BJ (cell line): ENCODE measurements at regions of chr5 and their contacts with region 1.

Region 1: DNA sequence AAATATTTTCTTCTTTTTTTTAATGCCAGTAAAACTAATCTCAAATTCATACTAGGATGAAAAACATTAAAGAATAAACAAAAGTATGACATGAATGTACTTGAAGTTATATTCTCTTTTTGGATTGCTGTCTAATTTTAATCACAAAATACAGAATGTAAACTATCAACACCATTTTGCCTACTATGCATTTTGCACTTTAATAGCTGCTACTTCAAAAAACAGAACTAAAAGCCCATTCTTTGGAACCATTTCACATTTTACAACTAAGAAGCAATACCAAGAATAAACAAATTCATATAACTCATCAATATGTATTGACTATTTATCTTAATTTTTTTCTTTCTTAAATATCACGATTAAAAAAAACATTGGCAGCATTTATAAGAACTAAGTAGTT is 58.1 kb downstream of the ADAMTS6 start:
- DNase-seq: no peak
- H3K4me3 ChIP-seq: no peak overlapping the region
- H3K27me3 ChIP-seq: no peaks in the 10 kb centered on the region
- CTCF ChIP-seq: no peak

Region 2: DNA sequence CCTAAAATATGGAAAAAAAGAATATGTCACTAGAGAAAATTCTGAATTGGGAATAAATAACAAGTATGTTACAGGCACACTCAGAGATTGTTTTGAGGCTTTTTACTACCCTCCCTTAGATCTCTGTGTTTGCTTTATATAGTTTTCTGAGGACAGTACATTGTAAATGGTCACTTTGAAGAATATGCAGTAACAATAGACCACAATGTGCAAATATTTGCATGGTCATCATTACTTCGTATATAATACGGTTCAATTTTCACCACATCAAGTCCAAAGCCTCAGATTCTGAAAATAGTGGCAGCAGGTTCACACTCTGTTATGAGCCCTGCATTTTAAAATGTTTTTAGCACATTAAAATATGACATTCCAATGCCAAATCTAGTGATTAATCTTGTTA is 180.5 kb before region 1 on chr5:
- CTCF ChIA-PET with region 1: no interaction called
- POLR2A ChIA-PET with region 1: interaction called, 11 read pairs
- DNase-seq: no peak
- H3K4me3 ChIP-seq: no peak overlapping the region
- H3K27me3 ChIP-seq: no peaks in the 10 kb centered on the region
- CTCF ChIP-seq: no peak

Region 3: GRCh38 chr5:65434122-65434521 is 10.5 kb after region 1 on chr5:
- CTCF ChIA-PET with region 1: no interaction called
- POLR2A ChIA-PET with region 1: no interaction called
- DNase-seq: no peak
- H3K4me3 ChIP-seq: no peak overlapping the region
- H3K27me3 ChIP-seq: no peaks in the 10 kb centered on the region
- CTCF ChIP-seq: no peak

Region 4: DNA sequence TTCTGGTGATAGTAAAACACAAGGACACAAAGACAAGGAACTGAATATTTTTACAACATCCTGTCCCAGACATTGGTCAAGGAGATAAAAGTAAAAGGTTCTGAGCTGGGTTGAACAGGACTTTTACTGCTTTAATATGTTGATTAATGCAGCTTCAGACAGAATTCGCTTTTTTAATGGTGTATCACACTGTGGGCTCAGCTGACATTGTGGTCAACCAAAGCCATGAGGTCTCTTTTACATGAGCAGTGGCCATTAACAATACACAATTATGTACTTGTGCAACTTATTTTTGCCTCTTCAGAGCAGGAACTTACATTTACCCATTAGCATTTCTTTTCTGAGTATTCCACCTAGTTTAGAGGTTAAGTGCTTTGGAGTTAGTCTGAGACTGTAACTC is 480.0 kb after region 1 on chr5:
- CTCF ChIA-PET with region 1: no interaction called
- POLR2A ChIA-PET with region 1: no interaction called
- DNase-seq: no peak
- H3K4me3 ChIP-seq: no peak overlapping the region
- H3K27me3 ChIP-seq: no peaks in the 10 kb centered on the region
- CTCF ChIP-seq: no peak